PC-3 (cell line): ENCODE measurements at regions of chr12 and their contacts with region 1.

Region 1: GRCh38 chr12:95473884-95474659 is at the start of gene METAP2:
- DNase-seq: peak; percentile 96
- ATAC-seq: peak; percentile 96
- H3K4me3 ChIP-seq: peak within 1 kb of the TSS; percentile 91
- H3K27ac ChIP-seq: peak within 1 kb of the TSS; percentile 83
- H3K4me1 ChIP-seq: peaks cover 22% of the 10 kb centered on the region
- H3K27me3 ChIP-seq: no peaks in the 10 kb centered on the region
- CTCF ChIP-seq: no peak
- total RNA-seq, gene METAP2: 79.2 and 85.5 TPM in 2 replicates

Region 2: DNA sequence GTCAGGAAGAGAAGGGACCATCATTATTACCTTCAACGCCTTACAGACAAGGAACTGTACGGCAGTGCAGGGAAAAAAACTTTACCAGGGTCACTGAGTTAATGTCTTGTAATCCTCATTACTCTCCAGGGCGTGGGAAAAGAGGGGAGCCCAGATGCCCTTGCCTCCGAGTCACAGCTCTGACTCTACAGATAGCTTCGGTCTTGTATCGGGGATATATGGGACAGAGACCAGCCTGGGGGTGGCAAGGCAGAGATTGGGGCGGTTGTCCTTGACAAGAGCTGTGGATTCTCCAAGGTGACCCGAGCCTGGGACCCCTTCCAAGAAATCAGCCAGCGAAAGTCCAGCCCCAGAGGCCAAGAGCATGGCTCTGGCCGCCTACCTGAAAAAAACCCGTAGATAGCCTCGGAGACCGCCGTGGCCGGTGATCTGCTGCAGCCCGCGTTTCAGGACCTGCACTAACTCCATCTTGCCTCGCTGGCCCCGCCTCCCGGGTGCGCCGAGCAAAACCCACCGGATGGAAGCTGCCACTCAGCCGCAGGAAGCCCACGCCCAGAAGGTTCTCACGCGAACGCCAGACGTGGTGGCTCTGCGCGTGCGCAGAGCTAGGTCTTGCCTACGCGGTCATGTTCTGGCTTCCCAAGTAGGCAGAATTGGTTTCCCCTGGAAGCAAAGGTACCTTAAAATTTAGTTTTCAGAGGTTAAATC is 470.7 kb before region 1 on chr12 and contains the start of gene NDUFA12:
- CTCF ChIA-PET with region 1: no interaction called
- POLR2A ChIA-PET with region 1: no interaction called
- intact Hi-C with region 1: loop called (anchors 5 kb)
- DNase-seq: peak; percentile 98
- ATAC-seq: peak; percentile 99
- H3K4me3 ChIP-seq: peak within 1 kb of the TSS; percentile 88
- H3K27ac ChIP-seq: peak within 1 kb of the TSS; percentile 33
- H3K4me1 ChIP-seq: peaks cover 4% of the 10 kb centered on the region; the same call in 1 of the 2 replicates
- H3K27me3 ChIP-seq: no peaks in the 10 kb centered on the region
- CTCF ChIP-seq: no peak
- total RNA-seq, gene NDUFA12: 118 and 130 TPM in 2 replicates

Region 3: GRCh38 chr12:95198914-95199313 is 275.2 kb before region 1 on chr12:
- CTCF ChIA-PET with region 1: no interaction called
- POLR2A ChIA-PET with region 1: interaction called, 12 read pairs
- intact Hi-C with region 1: no loop called
- DNase-seq: no peak
- ATAC-seq: no peak
- H3K4me3 ChIP-seq: no peak overlapping the region
- H3K27ac ChIP-seq: no peak overlapping the region
- H3K4me1 ChIP-seq: peaks cover 47% of the 10 kb centered on the region
- H3K27me3 ChIP-seq: no peaks in the 10 kb centered on the region
- CTCF ChIP-seq: no peak

Region 4: DNA sequence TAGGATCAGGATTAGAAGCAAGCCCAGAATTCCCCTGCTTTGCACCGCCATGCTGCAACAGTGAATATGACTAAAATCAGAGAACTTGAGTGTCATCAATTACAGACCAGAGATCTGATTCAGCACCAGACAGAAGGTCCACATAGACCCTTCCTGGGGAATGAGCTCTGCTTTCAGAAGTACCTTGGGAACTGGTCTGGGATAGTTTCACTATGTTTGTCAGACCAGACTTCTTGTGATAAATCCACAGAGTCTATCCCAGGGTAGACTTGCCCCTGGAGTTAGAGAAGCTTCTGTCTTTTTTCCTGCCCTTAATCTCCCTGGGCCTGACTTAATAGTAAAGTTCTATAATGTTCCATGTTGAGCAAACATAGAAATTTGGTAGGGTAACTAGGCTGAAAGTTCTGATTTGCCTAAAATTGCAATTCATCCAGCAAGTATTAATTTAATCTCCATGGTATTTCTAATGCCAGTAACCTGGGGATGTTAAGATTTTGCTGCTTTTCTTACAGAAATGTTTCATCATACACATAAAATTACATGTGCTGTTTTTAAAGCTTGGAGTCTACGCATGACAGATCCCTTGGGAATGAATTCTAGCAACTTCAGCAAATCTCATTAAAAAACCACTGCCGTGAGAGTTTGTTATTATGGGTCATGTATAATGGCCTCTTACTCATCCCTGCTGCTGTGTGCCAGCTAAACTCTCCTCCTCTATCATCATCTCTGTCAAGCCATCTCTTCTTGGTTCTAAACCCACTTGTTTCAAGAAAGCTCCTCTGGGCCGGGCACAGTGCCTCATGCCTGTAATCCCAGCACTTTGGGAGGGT is 61.4 kb before region 1 on chr12:
- CTCF ChIA-PET with region 1: no interaction called
- POLR2A ChIA-PET with region 1: interaction called, 4 read pairs
- intact Hi-C with region 1: loop called (anchors 2 kb)
- DNase-seq: peak; percentile 92
- ATAC-seq: peak; percentile 84
- H3K4me3 ChIP-seq: no peak overlapping the region
- H3K27ac ChIP-seq: peak overlapping the region; percentile 81
- H3K4me1 ChIP-seq: peaks cover 14% of the 10 kb centered on the region
- H3K27me3 ChIP-seq: no peaks in the 10 kb centered on the region
- CTCF ChIP-seq: no peak

Region 5: GRCh38 chr12:95424271-95424994 is 49.6 kb before region 1 on chr12:
- CTCF ChIA-PET with region 1: no interaction called
- POLR2A ChIA-PET with region 1: interaction called, 10 read pairs
- intact Hi-C with region 1: no loop called
- DNase-seq: no peak
- ATAC-seq: no peak
- H3K4me3 ChIP-seq: no peak overlapping the region
- H3K27ac ChIP-seq: no peak overlapping the region
- H3K4me1 ChIP-seq: no peaks in the 10 kb centered on the region
- H3K27me3 ChIP-seq: no peaks in the 10 kb centered on the region
- CTCF ChIP-seq: no peak

Region 6: GRCh38 chr12:95522692-95523091 is 48.6 kb after region 1 on chr12:
- CTCF ChIA-PET with region 1: no interaction called
- POLR2A ChIA-PET with region 1: interaction called, 29 read pairs
- intact Hi-C with region 1: no loop called
- DNase-seq: no peak
- ATAC-seq: no peak
- H3K4me3 ChIP-seq: no peak overlapping the region
- H3K27ac ChIP-seq: no peak overlapping the region
- H3K4me1 ChIP-seq: no peaks in the 10 kb centered on the region
- H3K27me3 ChIP-seq: no peaks in the 10 kb centered on the region
- CTCF ChIP-seq: no peak